Ovary (tissue), 10 donors: ENCODE measurements at regions of chr3 and their contacts with region 1.

Region 1: GRCh38 chr3:186273586-186273985 is 88.4 kb downstream of the DGKG start:
- DNase-seq: no peak
- H3K4me3 ChIP-seq: no peak overlapping the region
- H3K27ac ChIP-seq: no peak overlapping the region
- H3K4me1 ChIP-seq: no peaks in the 10 kb centered on the region
- H3K27me3 ChIP-seq: no peaks in the 10 kb centered on the region
- CTCF ChIP-seq: no peak
- EP300 ChIP-seq: no peak
- POLR2A ChIP-seq: no peak

Region 2: DNA sequence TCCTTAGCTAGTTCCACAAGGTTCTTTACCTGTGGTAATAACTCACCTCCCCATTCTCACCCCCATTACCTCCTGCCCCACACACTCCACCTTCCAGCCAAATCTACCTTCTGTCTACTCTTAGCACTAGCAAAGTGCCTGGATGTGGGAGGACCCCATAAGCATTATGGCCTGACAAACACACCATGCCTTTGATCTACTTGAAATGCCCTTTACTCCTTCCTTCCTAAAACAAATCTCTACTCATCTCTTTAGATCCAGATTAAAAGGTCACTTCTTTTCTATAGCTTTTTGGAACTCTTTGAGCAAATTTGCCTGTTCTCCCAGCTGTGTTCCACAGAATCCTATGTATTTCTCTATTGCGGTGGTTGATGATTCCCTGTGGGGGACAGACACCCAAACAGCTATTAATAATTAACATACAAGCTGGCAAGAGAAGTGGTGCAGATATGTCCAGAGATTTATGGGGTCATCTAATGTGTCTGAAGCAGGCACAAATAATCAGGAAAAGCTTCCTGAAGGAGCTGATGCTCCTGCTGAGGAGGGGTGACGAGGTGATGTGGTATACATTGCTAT is 54.4 kb after region 1 on chr3:
- intact Hi-C with region 1: loop called in 1 of 4 experiments (anchors 2 kb)
- DNase-seq: no peak
- H3K4me3 ChIP-seq: no peak overlapping the region
- H3K27ac ChIP-seq: no peak overlapping the region
- H3K4me1 ChIP-seq: no peaks in the 10 kb centered on the region
- H3K27me3 ChIP-seq: no peaks in the 10 kb centered on the region
- CTCF ChIP-seq: no peak
- EP300 ChIP-seq: no peak
- POLR2A ChIP-seq: no peak